ENCODE measurements at regions of chr9 and their contacts with region 1.

Region 1: GRCh38 chr9:112873773-112874405 is 16.8 kb downstream of the SLC46A2 start:
- DNase-seq: no peak
- H3K4me3 ChIP-seq: no peak overlapping the region
- H3K27ac ChIP-seq: no peak overlapping the region
- H3K4me1 ChIP-seq: no peaks in the 10 kb centered on the region
- H3K27me3 ChIP-seq: no peaks in the 10 kb centered on the region
- CTCF ChIP-seq: no peak
- EP300 ChIP-seq: no peak
- POLR2A ChIP-seq: no peak

Region 2: GRCh38 chr9:112921549-112921948 is 47.7 kb after region 1 on chr9:
- in situ Hi-C with region 1: no loop called
- intact Hi-C with region 1: no loop called
- DNase-seq: no peak
- H3K4me3 ChIP-seq: no peak overlapping the region
- H3K27ac ChIP-seq: no peak overlapping the region
- H3K4me1 ChIP-seq: peaks cover 0 to 16% (median 7%) of the 10 kb centered on the region in 4 donors
- H3K27me3 ChIP-seq: no peaks in the 10 kb centered on the region
- CTCF ChIP-seq: peak in 4 of 5 experiments; percentile 34 to 39 (median 35)
- EP300 ChIP-seq: no peak
- POLR2A ChIP-seq: no peak

Region 3: DNA sequence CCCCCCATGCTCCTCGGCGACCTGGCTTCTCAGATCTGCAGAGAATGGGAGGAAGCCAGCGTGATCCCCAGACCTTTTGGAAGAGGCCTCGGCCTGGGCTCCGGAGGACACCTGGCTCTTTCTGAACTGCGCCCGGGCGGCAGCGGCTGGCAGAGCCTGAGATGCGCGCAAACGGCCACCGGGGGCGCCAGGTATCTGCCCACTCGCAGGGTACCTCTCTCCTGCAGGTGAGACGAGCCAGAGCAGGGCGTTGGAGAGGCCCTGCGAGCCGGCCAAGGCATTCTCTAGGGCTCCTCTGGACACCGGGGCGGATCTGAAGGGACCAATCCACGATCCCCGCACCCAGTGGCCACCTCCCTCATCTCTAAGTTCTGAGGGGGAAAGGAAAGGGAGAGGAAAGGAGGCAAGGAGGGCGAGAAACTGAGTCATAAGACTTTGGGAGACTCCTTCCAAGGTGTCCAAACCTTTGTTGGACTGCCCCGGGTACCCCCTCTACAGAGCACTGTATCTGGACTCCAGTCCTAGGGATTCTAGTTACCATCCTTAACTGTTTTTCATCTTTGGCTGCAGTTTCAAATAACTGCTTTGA is 71.8 kb after region 1 on chr9:
- in situ Hi-C with region 1: no loop called
- intact Hi-C with region 1: no loop called
- DNase-seq: peak; percentile 10
- H3K4me3 ChIP-seq: no peak overlapping the region
- H3K27ac ChIP-seq: no peak overlapping the region
- H3K4me1 ChIP-seq: no peaks in the 10 kb centered on the region
- H3K27me3 ChIP-seq: peaks cover 12% of the 10 kb centered on the region
- CTCF ChIP-seq: peak in 2 of 5 experiments; percentile 17 to 26
- EP300 ChIP-seq: no peak
- POLR2A ChIP-seq: no peak

Region 4: DNA sequence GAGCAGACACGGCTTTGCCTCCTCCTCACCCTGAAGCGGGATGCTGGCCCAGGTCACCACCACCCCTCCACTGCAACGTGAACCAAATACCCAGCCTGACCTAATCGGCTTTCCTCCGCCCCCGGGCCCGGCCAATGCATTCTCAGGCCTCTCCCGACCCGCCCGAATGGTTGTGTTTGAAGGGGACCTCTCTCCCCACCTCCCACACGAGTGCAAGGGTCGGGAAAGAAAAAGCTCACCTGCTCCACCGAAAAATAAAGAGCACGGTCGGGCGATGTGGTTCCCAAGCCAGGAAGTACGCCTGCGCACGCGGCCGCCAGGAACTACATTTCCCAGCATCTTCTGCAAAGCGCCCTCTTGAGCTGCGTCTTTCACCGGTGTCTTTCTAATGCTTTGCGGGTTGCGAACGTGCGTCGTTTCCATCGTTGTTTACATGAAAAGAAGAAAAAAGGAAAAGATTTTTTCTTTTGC is 138.1 kb after region 1 on chr9 and contains the start of gene ZNF883:
- in situ Hi-C with region 1: no loop called
- intact Hi-C with region 1: no loop called
- DNase-seq: peak; percentile 33
- H3K4me3 ChIP-seq: peak within 1 kb of the TSS in 2 of 4 donors; percentile 3 to 39
- H3K27ac ChIP-seq: no peak within 1 kb of the TSS
- H3K4me1 ChIP-seq: no peaks in the 10 kb centered on the region
- H3K27me3 ChIP-seq: peaks cover 9% of the 10 kb centered on the region
- CTCF ChIP-seq: no peak
- EP300 ChIP-seq: no peak
- POLR2A ChIP-seq: no peak
- total RNA-seq, gene ZNF883: 0.27 to 3.0 (median 0.64) TPM in 3 of 4 donors, not detected in the other

Region 5: DNA sequence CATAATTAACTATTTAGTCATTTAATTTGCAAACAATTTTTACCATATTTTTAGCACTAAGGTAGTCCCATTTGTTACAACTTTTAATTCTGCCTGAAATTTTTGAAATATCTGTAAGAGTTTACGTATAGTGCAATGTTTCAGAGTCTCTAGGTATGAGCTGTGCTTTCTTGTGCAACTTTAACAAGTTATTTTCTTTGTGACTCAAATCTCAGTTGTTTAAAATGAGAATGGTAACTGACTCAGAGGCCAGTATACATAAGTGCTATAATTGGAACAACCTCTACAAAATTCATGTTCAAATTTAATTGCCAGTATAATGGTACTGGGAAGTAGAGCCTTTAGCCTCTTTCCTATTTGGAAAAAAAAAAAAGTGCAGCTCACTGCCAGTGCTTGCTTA is 152.3 kb after region 1 on chr9:
- in situ Hi-C with region 1: no loop called
- intact Hi-C with region 1: no loop called
- DNase-seq: no peak
- H3K4me3 ChIP-seq: no peak overlapping the region
- H3K27ac ChIP-seq: no peak overlapping the region
- H3K4me1 ChIP-seq: no peaks in the 10 kb centered on the region
- H3K27me3 ChIP-seq: no peaks in the 10 kb centered on the region
- CTCF ChIP-seq: no peak
- EP300 ChIP-seq: no peak
- POLR2A ChIP-seq: no peak

Region 6: GRCh38 chr9:114059047-114059803 is 1185.3 kb after region 1 on chr9:
- in situ Hi-C with region 1: no loop called
- intact Hi-C with region 1: loop called (anchors 5 kb)
- DNase-seq: no peak
- H3K4me3 ChIP-seq: no peak overlapping the region
- H3K27ac ChIP-seq: no peak overlapping the region
- H3K4me1 ChIP-seq: peaks cover 0 to 4% (median 0%) of the 10 kb centered on the region in 4 donors
- H3K27me3 ChIP-seq: no peaks in the 10 kb centered on the region
- CTCF ChIP-seq: no peak
- EP300 ChIP-seq: no peak
- POLR2A ChIP-seq: no peak